HCT116 (cell line): ENCODE measurements at regions of chrX and their contacts with region 1.

Region 1: GRCh38 chrX:131633285-131633917 is 89.5 kb downstream of the OR13H1 start:
- DNase-seq: peak; percentile 29
- ATAC-seq: peak; percentile 98
- H3K4me3 ChIP-seq: no peak overlapping the region
- H3K27ac ChIP-seq: no peak overlapping the region
- H3K4me1 ChIP-seq: no peaks in the 10 kb centered on the region
- H3K27me3 ChIP-seq: no peaks in the 10 kb centered on the region
- CTCF ChIP-seq: peak; percentile 64 to 68 (median 66)
- POLR2A ChIP-seq: no peak
- RAD21 ChIP-seq: peak; percentile 84

Region 2: DNA sequence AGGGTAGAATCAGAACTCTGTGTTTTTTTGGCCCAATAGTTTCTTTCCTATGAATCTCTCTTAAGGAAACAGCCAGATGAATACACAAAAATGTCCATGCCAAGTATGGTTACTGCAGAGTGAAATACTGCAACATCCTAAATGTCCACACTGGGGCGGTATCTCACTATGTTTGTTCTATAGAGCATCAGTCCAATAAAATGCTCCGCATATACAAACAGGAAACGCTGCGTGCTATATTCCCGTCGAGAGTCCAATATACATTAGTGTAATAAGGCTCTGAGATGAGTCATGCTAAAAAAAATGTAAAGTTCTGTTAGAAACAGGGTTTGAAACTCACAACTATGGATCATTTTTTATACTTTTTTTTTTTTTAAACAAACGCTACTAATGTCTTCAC is 657.5 kb before region 1 on chrX:
- CTCF ChIA-PET with region 1: no interaction called
- POLR2A ChIA-PET with region 1: no interaction called
- RAD21 ChIA-PET with region 1: no interaction called
- intact Hi-C with region 1: loop called (anchors 1 kb)
- DNase-seq: peak; percentile 31
- ATAC-seq: peak; percentile 89
- H3K4me3 ChIP-seq: no peak overlapping the region
- H3K27ac ChIP-seq: no peak overlapping the region
- H3K4me1 ChIP-seq: no peaks in the 10 kb centered on the region
- H3K27me3 ChIP-seq: no peaks in the 10 kb centered on the region
- CTCF ChIP-seq: peak; percentile 40 to 65 (median 56); a peak in 5 of 6 replicates
- POLR2A ChIP-seq: no peak
- RAD21 ChIP-seq: peak; percentile 70

Region 3: GRCh38 chrX:130994671-130995070 is 638.7 kb before region 1 on chrX:
- CTCF ChIA-PET with region 1: interaction called, 7 read pairs
- POLR2A ChIA-PET with region 1: no interaction called
- RAD21 ChIA-PET with region 1: no interaction called
- intact Hi-C with region 1: loop called (anchors 1 kb)
- DNase-seq: no peak
- ATAC-seq: peak; percentile 53
- H3K4me3 ChIP-seq: no peak overlapping the region
- H3K27ac ChIP-seq: no peak overlapping the region
- H3K4me1 ChIP-seq: no peaks in the 10 kb centered on the region
- H3K27me3 ChIP-seq: no peaks in the 10 kb centered on the region
- CTCF ChIP-seq: peak; percentile 37 to 57 (median 47); a peak in 4 of 6 replicates
- POLR2A ChIP-seq: no peak
- RAD21 ChIP-seq: peak; percentile 45

Region 4: DNA sequence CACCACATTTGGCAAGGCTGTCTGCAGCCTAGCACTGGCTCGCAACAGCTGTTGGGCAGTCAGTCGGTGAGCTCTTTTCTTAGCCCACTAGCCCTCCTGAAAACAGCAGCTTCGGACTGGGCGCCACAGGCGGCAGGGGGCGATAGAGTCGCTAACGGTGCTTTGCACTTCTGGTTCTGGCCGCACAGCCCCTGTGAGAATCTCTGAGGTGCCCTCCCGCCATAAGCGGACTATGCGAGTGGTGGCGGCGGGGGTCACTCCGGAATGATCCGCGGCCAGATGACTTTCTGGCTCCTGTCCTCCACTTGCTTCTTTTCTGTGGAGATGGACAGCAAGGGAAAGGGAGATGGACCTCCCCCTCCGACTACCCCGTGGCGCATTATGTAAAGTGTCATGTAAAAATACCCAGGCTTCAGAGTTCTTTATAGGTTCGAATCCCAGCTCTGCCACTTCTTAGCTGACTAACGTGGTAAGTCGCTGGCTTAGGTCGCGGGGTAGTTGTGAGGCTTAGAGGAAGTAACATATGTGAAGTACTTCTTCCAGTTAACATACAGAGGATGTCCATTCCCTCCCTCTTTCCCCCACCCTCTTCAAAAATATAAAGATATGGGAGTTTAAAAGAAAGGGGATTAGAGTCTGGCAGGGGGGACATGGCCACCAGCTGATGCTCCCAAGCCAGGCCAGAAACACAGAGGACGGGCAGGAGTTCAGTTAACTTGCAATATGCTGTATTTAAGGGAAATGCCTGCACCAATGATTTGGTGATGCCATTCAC is 564.3 kb before region 1 on chrX:
- CTCF ChIA-PET with region 1: interaction called, 3 read pairs
- POLR2A ChIA-PET with region 1: no interaction called
- RAD21 ChIA-PET with region 1: no interaction called
- intact Hi-C with region 1: loop called (anchors 1 kb)
- DNase-seq: peak; percentile 19
- ATAC-seq: peak; percentile 94
- H3K4me3 ChIP-seq: no peak overlapping the region
- H3K27ac ChIP-seq: no peak overlapping the region
- H3K4me1 ChIP-seq: no peaks in the 10 kb centered on the region
- H3K27me3 ChIP-seq: no peaks in the 10 kb centered on the region; the same call in 1 of the 2 replicates
- CTCF ChIP-seq: peak; percentile 35 to 58 (median 55); a peak in 5 of 6 replicates
- POLR2A ChIP-seq: no peak
- RAD21 ChIP-seq: peak; percentile 51

Region 5: DNA sequence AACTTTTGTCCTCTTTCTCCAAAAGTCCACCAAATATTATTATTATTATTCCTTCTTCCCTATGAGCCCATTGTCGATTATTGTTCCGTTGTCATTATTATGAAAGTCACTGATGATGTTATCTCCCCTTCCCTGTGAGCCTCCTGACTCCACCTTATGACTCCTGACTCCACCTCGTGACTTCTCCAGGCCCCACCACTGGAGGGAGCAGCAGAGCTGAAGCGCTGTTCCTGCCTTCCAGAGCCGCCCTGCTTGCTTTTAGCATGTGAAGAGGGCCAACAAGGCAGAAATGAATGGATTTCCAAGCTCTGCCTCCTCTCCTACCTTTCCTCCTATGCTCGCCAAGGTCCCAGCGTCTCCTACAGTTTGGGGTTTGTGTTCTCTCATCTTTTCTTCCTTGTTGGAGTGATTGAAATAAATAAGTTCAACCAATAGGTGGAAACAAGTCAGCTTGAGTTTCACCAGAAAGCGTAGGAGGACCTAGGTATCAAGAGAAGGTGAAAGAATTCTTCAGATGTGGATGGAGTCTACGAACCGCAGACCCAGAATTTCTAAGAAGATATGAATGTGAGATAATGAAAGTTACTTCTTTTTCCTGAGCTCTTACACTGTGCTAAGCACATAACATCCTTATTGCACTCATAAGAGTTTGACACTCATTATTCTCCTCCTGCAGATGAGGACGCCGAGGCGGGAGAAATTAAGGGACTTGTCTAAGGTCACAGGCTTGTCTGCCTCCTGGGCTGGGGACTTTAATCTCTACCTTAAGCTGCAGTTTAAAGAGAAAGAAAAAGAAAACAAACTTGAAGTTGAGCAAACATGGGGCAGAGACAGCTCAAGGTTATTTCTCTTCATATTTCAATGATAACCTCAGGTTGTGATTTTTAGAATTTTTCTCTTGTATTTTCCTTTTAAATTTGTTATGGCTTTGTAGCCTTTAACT is 370.4 kb before region 1 on chrX:
- CTCF ChIA-PET with region 1: interaction called, 5 read pairs
- POLR2A ChIA-PET with region 1: no interaction called
- RAD21 ChIA-PET with region 1: no interaction called
- intact Hi-C with region 1: loop called (anchors 1 kb)
- DNase-seq: peak; percentile 16
- ATAC-seq: peak; percentile 91
- H3K4me3 ChIP-seq: no peak overlapping the region
- H3K27ac ChIP-seq: no peak overlapping the region
- H3K4me1 ChIP-seq: no peaks in the 10 kb centered on the region
- H3K27me3 ChIP-seq: no peaks in the 10 kb centered on the region
- CTCF ChIP-seq: peak; percentile 63 to 64 (median 63)
- POLR2A ChIP-seq: no peak
- RAD21 ChIP-seq: peak; percentile 73